Activated CD8-positive, alpha-beta T cell treated with anti-CD3 and anti-CD28 coated beads, Interleukin-2, amount 10 ng/mL, durations not matched to agents 7 days and 5 days (primary cell): ENCODE measurements at regions of chr6 and their contacts with region 1.

Region 1: GRCh38 chr6:85449818-85450759 is at the start of gene NT5E:
- DNase-seq: peak; percentile 74
- ATAC-seq: peak; percentile 64
- H3K4me3 Mint-ChIP-seq: peak within 1 kb of the TSS; percentile 93
- H3K27ac Mint-ChIP-seq: peak within 1 kb of the TSS; percentile 89
- H3K4me1 Mint-ChIP-seq: peaks cover 67% of the 10 kb centered on the region
- H3K27me3 Mint-ChIP-seq: peaks cover 11% of the 10 kb centered on the region
- total RNA-seq, gene NT5E: 7.4 to 7.6 TPM

Region 2: GRCh38 chr6:85126485-85127167 is 323.5 kb before region 1 on chr6:
- CTCF ChIA-PET with region 1: no interaction called
- POLR2A ChIA-PET with region 1: no interaction called
- DNase-seq: no peak
- ATAC-seq: no peak
- H3K4me3 Mint-ChIP-seq: no peak overlapping the region
- H3K27ac Mint-ChIP-seq: no peak overlapping the region
- H3K4me1 Mint-ChIP-seq: no peaks in the 10 kb centered on the region
- H3K27me3 Mint-ChIP-seq: peaks cover 3% of the 10 kb centered on the region

Region 3: DNA sequence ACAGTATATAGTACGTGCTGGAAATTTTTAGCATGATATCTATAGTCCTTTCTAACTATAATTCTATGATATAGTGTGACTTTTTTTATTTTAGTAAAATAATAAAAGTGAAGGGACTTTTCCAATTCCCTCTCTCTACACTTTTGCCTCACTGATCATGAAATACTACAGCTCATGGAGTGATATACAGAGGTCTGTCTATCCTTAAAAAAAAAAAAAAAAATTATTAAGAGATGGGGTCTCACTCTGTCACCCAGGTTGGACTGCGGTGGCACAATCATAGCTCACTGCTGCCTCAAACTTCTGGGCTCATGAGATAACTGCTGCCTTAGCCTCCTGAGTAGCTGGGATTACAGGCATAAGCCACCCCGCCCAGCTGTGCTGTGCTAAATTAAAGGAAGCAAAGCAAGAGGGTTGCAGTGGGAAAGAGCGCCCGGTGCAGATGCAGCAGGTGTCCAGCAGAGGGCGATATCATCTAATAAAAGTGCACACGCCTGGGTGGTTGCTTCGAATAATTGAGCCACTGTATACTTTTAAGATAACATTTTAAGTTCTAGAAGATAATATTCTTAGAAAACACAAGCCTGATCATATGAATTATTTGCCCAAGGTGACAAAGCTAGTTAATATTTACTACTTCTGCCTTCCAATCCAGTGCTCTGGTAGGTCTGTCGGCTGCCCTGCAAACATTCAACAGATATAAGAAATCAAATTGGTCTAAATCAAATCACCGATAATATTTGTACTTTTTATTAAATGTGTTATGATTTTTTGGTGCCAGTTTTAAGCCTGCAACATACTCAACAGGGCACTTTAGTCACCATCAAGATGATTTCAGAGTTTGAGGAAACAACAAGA is 95.1 kb before region 1 on chr6:
- CTCF ChIA-PET with region 1: interaction called, 15 read pairs
- POLR2A ChIA-PET with region 1: no interaction called
- DNase-seq: peak; percentile 77
- ATAC-seq: peak; percentile 87
- H3K4me3 Mint-ChIP-seq: no peak overlapping the region
- H3K27ac Mint-ChIP-seq: no peak overlapping the region
- H3K4me1 Mint-ChIP-seq: no peaks in the 10 kb centered on the region
- H3K27me3 Mint-ChIP-seq: peaks cover 4% of the 10 kb centered on the region

Region 4: DNA sequence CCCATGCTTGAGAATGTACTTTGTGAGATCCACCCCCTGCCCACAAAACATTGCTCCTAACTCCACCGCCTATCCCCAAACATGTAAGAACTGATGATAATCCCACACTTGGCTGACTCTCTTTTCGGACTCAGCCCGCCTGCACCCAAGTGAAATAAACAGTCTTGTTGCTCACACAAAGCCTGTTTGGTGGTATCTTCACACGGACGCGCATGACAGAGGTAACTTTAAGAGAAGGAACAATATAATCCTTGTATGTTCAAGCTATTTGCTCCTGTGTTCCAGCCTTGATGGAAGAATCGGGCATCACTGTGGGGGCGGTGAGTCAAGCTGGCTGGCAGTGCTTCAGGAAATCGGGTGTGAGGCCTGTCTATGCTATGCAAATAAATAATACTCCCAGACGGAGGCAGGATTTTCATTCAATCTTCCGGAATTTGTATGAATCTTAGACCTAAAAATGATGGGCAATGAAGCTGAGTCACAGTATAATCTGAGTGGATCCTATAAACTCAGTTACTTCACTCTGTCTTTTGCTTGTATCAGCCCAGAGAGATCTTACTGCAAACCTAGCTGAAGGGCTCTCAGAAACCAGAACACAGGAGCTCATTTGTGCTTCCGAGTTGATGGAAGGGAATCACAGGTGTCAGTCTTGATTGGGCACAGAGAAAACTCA is 45.5 kb before region 1 on chr6:
- CTCF ChIA-PET with region 1: interaction called, 54 read pairs
- POLR2A ChIA-PET with region 1: interaction called, 18 read pairs
- DNase-seq: no peak
- ATAC-seq: peak; percentile 31
- H3K4me3 Mint-ChIP-seq: no peak overlapping the region
- H3K27ac Mint-ChIP-seq: peak overlapping the region; percentile 79
- H3K4me1 Mint-ChIP-seq: peaks cover 73% of the 10 kb centered on the region
- H3K27me3 Mint-ChIP-seq: no peaks in the 10 kb centered on the region

Region 5: DNA sequence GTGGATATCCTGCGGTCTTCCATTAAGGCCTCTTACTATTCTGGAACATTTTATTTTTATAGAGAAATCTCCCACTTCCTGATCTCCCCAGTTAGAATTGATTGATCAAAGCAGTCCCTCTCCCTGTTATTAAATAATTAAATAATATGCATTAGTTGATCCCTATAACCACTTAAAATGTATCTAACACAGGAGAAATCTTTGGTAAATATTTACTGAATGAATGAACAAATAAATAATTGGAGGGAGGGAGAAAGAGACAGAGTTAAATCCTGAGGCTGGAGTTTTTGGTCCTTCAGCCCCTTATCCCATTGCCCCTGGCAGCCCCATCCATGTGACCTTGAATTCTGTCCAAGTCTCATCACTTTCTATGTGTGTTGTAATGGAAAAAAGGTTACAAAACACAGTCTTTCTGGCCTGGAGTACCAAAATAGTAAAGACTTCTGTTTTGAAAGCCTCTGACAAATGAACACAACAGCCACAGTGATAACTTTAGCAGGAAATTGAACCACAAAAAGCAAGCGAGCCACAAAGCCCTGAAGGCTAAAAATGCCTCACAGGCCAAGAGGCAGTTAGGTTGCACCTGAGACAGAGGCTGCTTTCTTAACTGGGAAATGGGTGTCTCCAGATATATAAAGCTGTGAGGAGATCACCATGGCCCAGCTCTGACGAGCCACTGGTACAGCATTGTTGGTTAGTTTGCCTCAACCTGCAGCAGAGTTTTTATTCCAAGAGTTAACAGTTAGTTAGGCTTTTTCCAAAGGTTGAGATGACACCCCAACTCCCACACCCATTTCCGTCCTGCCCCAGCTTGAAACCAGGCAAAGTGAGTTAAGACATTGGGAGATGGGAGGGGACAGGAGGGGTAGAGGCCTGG is 11.1 kb after region 1 on chr6:
- CTCF ChIA-PET with region 1: interaction called, 85 read pairs
- POLR2A ChIA-PET with region 1: interaction called, 31 read pairs
- DNase-seq: peak; percentile 83
- ATAC-seq: peak; percentile 73
- H3K4me3 Mint-ChIP-seq: peak overlapping the region; percentile 49
- H3K27ac Mint-ChIP-seq: peak overlapping the region; percentile 85
- H3K4me1 Mint-ChIP-seq: peaks cover 96% of the 10 kb centered on the region
- H3K27me3 Mint-ChIP-seq: no peaks in the 10 kb centered on the region

Region 6: DNA sequence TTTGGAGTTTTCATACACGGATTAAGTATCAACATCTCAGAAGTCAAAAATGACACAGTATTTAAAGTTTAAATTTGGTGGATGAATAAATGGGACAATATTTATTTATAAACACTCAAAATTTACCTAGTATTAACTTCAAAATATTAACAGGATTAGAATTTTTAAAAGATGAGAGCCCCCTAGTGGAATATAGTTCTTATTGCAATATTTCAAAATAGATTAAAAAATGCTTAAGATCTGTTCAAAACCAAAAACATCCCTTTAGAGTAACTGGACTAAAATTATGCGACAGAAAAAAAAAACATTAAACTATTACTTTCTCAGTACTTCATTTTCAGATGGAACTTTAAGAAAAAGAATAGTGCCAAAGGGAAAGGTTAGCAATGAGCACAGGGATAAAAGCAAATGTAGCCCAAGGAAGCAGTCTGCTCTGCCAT is 87.0 kb after region 1 on chr6:
- CTCF ChIA-PET with region 1: interaction called, 17 read pairs
- POLR2A ChIA-PET with region 1: no interaction called
- DNase-seq: no peak
- ATAC-seq: no peak
- H3K4me3 Mint-ChIP-seq: no peak overlapping the region
- H3K27ac Mint-ChIP-seq: peak overlapping the region; percentile 24
- H3K4me1 Mint-ChIP-seq: no peaks in the 10 kb centered on the region
- H3K27me3 Mint-ChIP-seq: no peaks in the 10 kb centered on the region